H1 (cell line): ENCODE measurements at regions of chr4 and their contacts with region 1.

Region 1: DNA sequence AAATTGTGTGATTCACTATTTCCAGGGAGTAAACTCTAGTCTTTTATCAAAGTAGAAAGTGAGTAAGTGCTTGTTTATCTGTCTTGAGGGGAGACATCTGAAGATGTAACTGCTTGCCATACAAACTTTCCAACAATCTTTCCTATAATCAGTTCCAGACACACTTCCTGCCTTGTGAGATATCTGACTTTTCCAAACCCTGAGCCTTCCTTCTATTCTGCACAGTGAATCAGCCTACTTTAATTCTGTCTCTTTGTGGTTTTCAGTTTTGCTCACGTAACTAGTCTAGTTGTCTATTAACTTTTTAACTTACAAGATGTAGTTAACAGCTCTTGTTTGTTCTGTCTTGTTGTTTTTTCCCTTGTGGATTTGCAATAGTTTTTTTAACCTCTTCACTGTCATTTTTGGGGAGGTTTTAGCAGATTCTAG is 947.8 kb downstream of the C4orf33 start:
- DNase-seq: no peak
- H3K4me3 ChIP-seq: no peak overlapping the region
- H3K27ac ChIP-seq: no peak overlapping the region
- H3K4me1 ChIP-seq: peaks cover 0 to 7% (median 1%) of the 10 kb centered on the region in 4 experiments; a peak in 5 of 7 replicates
- H3K27me3 ChIP-seq: no peaks in the 10 kb centered on the region
- CTCF ChIP-seq: no peak
- EP300 ChIP-seq: no peak
- POLR2A ChIP-seq: no peak
- RAD21 ChIP-seq: no peak

Region 2: GRCh38 chr4:130026185-130026584 is 17.6 kb before region 1 on chr4:
- CTCF ChIA-PET with region 1: interaction called, 3 read pairs
- POLR2A ChIA-PET with region 1: interaction called, 19 read pairs
- DNase-seq: peak; percentile 85 to 96
- H3K4me3 ChIP-seq: no peak overlapping the region
- H3K27ac ChIP-seq: no peak overlapping the region
- H3K4me1 ChIP-seq: peaks cover 2 to 30% (median 10%) of the 10 kb centered on the region in 4 experiments; a peak in 4 of 7 replicates
- H3K27me3 ChIP-seq: no peaks in the 10 kb centered on the region
- CTCF ChIP-seq: no peak
- EP300 ChIP-seq: peak; percentile 51 to 100
- POLR2A ChIP-seq: peak in 1 of 2 experiments; percentile 44; a peak in 1 of 3 replicates
- RAD21 ChIP-seq: peak; percentile 28 to 47; a peak in 3 of 4 replicates

Region 3: GRCh38 chr4:130068072-130068471 is 24.3 kb after region 1 on chr4:
- CTCF ChIA-PET with region 1: no interaction called
- POLR2A ChIA-PET with region 1: no interaction called
- DNase-seq: no peak
- H3K4me3 ChIP-seq: no peak overlapping the region
- H3K27ac ChIP-seq: no peak overlapping the region
- H3K4me1 ChIP-seq: peaks cover 0 to 3% (median 1%) of the 10 kb centered on the region in 4 experiments; a peak in 4 of 7 replicates
- H3K27me3 ChIP-seq: peaks cover 0 to 1% (median 0%) of the 10 kb centered on the region in 4 experiments; a peak in 1 of 7 replicates
- CTCF ChIP-seq: no peak
- EP300 ChIP-seq: no peak
- POLR2A ChIP-seq: no peak
- RAD21 ChIP-seq: no peak

Region 4: DNA sequence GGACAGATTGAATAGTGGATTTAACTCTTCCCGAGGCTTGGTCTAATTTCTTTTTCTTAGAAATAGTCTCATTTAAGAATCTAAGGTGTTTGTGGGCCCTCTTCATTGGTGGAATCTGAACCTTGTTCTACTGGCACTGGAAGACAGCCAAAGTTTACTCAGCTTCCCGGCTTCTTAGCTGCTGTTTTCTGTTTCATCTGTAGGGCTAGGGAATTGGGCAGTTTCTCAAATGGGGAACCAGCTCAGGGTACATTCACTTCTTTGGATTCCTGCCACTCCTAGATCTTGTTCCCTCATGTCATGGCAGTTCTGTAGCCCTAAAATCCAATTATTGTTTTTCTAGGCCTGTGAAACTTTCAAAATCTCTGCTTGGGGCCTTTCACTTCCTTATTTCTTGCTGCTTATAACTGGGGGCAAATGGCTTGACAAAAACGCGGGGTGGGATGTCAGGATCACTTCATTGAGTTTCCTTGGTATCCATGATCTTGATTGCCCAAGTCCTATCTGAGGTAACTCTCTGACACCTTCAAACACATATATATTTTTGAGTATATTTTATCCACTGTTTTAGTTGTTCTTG is 37.2 kb after region 1 on chr4:
- CTCF ChIA-PET with region 1: no interaction called
- POLR2A ChIA-PET with region 1: no interaction called
- DNase-seq: no peak
- H3K4me3 ChIP-seq: no peak overlapping the region
- H3K27ac ChIP-seq: no peak overlapping the region
- H3K4me1 ChIP-seq: no peaks in the 10 kb centered on the region
- H3K27me3 ChIP-seq: peaks cover 0 to 1% (median 0%) of the 10 kb centered on the region in 4 experiments; a peak in 1 of 7 replicates
- CTCF ChIP-seq: no peak
- EP300 ChIP-seq: no peak
- POLR2A ChIP-seq: no peak
- RAD21 ChIP-seq: no peak

Region 5: DNA sequence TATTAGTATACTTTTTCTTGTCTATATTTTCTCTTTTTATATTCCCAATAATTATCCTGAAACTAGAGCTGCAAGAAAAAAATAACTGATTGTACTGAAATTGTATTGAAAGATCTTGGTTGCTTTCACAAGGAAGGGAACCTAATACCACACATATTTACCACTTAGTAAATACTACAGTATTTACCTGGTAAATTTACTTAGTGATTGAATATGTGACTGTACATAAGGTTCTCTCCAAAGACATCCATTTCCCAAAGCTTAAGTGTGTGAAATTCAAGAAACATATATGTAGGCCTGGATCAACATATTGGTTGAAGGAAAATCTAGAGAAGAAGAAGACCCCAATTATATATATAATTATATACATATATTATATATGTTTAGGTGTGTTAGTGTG is 324.9 kb after region 1 on chr4:
- CTCF ChIA-PET with region 1: no interaction called
- POLR2A ChIA-PET with region 1: no interaction called
- DNase-seq: no peak
- H3K4me3 ChIP-seq: no peak overlapping the region
- H3K27ac ChIP-seq: no peak overlapping the region
- H3K4me1 ChIP-seq: no peaks in the 10 kb centered on the region; a peak in 1 of 7 replicates
- H3K27me3 ChIP-seq: no peaks in the 10 kb centered on the region
- CTCF ChIP-seq: no peak
- EP300 ChIP-seq: no peak
- POLR2A ChIP-seq: no peak
- RAD21 ChIP-seq: no peak